ENCODE measurements at regions of chr2 and their contacts with region 1.

Region 1: GRCh38 chr2:240434728-240435456 is 571 bp upstream of the GPC1 start:
- DNase-seq: peak; percentile 95 to 96
- H3K4me3 ChIP-seq: peak overlapping the region; percentile 42 to 92
- H3K27ac ChIP-seq: peak overlapping the region; percentile 88 to 89
- H3K4me1 ChIP-seq: peaks cover 0 to 16% of the 10 kb centered on the region in 2 donors
- H3K27me3 ChIP-seq: no peaks in the 10 kb centered on the region
- CTCF ChIP-seq: peak in 1 of 4 experiments; percentile 3
- POLR2A ChIP-seq: peak in 1 of 2 donors; percentile 35

Region 2: GRCh38 chr2:240232961-240233893 is 201.7 kb before region 1 on chr2:
- intact Hi-C with region 1: loop called (anchors 5 kb)
- DNase-seq: peak; percentile 85 to 88
- H3K4me3 ChIP-seq: peak overlapping the region in 1 of 2 donors; percentile 21
- H3K27ac ChIP-seq: peak overlapping the region; percentile 13 to 63
- H3K4me1 ChIP-seq: no peaks in the 10 kb centered on the region
- H3K27me3 ChIP-seq: no peaks in the 10 kb centered on the region
- CTCF ChIP-seq: peak; percentile 83 to 95 (median 94)
- POLR2A ChIP-seq: peak in 1 of 2 donors; percentile 23

Region 3: GRCh38 chr2:240325016-240325944 is 109.6 kb before region 1 on chr2:
- intact Hi-C with region 1: no loop called
- DNase-seq: peak in 1 of 2 donors; percentile 30
- H3K4me3 ChIP-seq: no peak overlapping the region
- H3K27ac ChIP-seq: no peak overlapping the region
- H3K4me1 ChIP-seq: no peaks in the 10 kb centered on the region
- H3K27me3 ChIP-seq: no peaks in the 10 kb centered on the region
- CTCF ChIP-seq: no peak
- POLR2A ChIP-seq: no peak